Activated CD8-positive, alpha-beta T cell treated with anti-CD3 and anti-CD28 coated beads for 36 hours (primary cell): ENCODE measurements at regions of chr11 and their contacts with region 1.

Region 1: GRCh38 chr11:123020968-123021367 is 39.3 kb upstream of the BSX start:
- DNase-seq: peak; percentile 52
- ATAC-seq: peak; percentile 86
- H3K4me3 Mint-ChIP-seq: no peak overlapping the region
- H3K27ac Mint-ChIP-seq: no peak overlapping the region
- H3K4me1 Mint-ChIP-seq: peaks cover 8% of the 10 kb centered on the region
- H3K27me3 Mint-ChIP-seq: peaks cover 3% of the 10 kb centered on the region
- CTCF ChIP-seq: peak; percentile 61

Region 2: GRCh38 chr11:122578168-122578825 is 442.7 kb before region 1 on chr11:
- CTCF ChIA-PET with region 1: interaction called, 10 read pairs
- POLR2A ChIA-PET with region 1: no interaction called
- intact Hi-C with region 1: no loop called
- DNase-seq: peak; percentile 19
- ATAC-seq: no peak
- H3K4me3 Mint-ChIP-seq: no peak overlapping the region
- H3K27ac Mint-ChIP-seq: no peak overlapping the region
- H3K4me1 Mint-ChIP-seq: peaks cover 10% of the 10 kb centered on the region
- H3K27me3 Mint-ChIP-seq: peaks cover 1% of the 10 kb centered on the region
- CTCF ChIP-seq: no peak

Region 3: GRCh38 chr11:122863704-122864326 is 157.2 kb before region 1 on chr11:
- CTCF ChIA-PET with region 1: interaction called, 127 read pairs
- POLR2A ChIA-PET with region 1: interaction called, 4 read pairs
- intact Hi-C with region 1: loop called (anchors 5 kb)
- DNase-seq: peak; percentile 66
- ATAC-seq: no peak
- H3K4me3 Mint-ChIP-seq: no peak overlapping the region
- H3K27ac Mint-ChIP-seq: no peak overlapping the region
- H3K4me1 Mint-ChIP-seq: peaks cover 17% of the 10 kb centered on the region
- H3K27me3 Mint-ChIP-seq: no peaks in the 10 kb centered on the region
- CTCF ChIP-seq: peak; percentile 89

Region 4: GRCh38 chr11:122888162-122888561 is 132.8 kb before region 1 on chr11:
- CTCF ChIA-PET with region 1: interaction called, 10 read pairs
- POLR2A ChIA-PET with region 1: no interaction called
- intact Hi-C with region 1: no loop called
- DNase-seq: no peak
- ATAC-seq: no peak
- H3K4me3 Mint-ChIP-seq: no peak overlapping the region
- H3K27ac Mint-ChIP-seq: no peak overlapping the region
- H3K4me1 Mint-ChIP-seq: peaks cover 13% of the 10 kb centered on the region
- H3K27me3 Mint-ChIP-seq: no peaks in the 10 kb centered on the region
- CTCF ChIP-seq: no peak

Region 5: DNA sequence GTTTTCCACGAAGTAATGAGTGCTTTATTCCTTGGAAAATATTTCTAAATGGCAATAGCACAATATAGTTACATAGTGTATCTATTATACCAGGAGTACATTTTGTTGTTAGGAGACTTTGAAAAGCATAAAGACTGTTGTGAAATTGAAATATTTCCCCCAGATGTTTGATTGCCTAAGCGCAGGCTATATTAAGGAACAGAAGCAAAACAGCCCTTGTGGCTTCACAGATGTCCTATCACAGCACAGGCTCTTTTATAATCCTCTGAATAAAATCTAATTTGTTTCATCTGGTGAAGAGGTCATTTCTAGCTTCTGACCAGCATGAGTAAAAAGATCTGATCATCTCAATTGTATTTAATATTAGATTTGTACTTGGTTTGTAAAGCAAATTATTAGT is 87.6 kb before region 1 on chr11:
- CTCF ChIA-PET with region 1: interaction called, 12 read pairs
- POLR2A ChIA-PET with region 1: no interaction called
- intact Hi-C with region 1: no loop called
- DNase-seq: no peak
- ATAC-seq: no peak
- H3K4me3 Mint-ChIP-seq: no peak overlapping the region
- H3K27ac Mint-ChIP-seq: no peak overlapping the region
- H3K4me1 Mint-ChIP-seq: no peaks in the 10 kb centered on the region
- H3K27me3 Mint-ChIP-seq: no peaks in the 10 kb centered on the region
- CTCF ChIP-seq: no peak

Region 6: DNA sequence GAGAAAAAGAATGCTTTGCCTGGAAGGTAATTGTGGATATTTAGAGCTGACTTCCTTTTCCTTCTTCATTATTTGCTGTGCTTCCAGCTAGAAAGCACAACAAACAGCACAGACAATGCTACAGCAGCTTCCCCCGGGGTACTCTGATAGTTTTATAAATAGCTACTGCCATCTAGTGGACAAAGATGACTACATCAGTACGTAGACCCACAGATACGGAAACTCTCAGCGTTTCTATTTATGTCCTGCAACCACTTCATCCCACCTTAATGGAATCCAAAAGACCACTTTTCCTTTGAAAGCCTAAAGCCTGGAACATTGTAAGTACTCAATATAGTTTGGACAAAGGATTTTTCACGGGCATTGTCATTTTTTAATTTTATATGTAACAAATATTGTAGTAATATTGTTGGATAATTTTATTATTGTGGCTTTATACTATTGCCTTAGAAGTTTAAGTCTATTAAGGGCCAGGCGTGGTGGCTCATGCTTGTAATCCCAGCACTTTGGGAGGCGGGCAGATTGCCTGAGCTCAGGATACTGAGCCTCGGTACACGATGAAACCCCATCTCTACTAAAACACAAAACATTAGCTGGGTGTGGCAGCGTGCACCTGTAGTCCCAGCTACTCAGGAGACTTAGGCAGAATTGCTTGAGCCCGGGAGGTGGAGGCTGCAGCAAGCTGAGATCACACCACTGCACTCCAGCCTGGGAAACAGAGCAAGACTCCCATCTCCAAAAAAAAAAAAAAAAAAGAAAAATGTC is 33.5 kb after region 1 on chr11:
- CTCF ChIA-PET with region 1: interaction called, 29 read pairs
- POLR2A ChIA-PET with region 1: interaction called, 6 read pairs
- intact Hi-C with region 1: no loop called
- DNase-seq: peak; percentile 39
- ATAC-seq: peak; percentile 73
- H3K4me3 Mint-ChIP-seq: peak overlapping the region; percentile 12
- H3K27ac Mint-ChIP-seq: peak overlapping the region; percentile 99
- H3K4me1 Mint-ChIP-seq: peaks cover 39% of the 10 kb centered on the region
- H3K27me3 Mint-ChIP-seq: no peaks in the 10 kb centered on the region
- CTCF ChIP-seq: peak; percentile 83